ENCODE measurements at regions of chr16 and their contacts with region 1.

Region 1: GRCh38 chr16:85275533-85276249 is 163.4 kb upstream of the CIBAR2 start:
- DNase-seq: peak; percentile 95
- H3K4me3 ChIP-seq: peak overlapping the region in 1 of 2 experiments; percentile 21; a peak in 1 of 4 replicates
- H3K27ac ChIP-seq: peak overlapping the region in 1 of 2 experiments; percentile 31; a peak in 1 of 4 replicates
- H3K4me1 ChIP-seq: peaks cover 0 to 46% of the 10 kb centered on the region in 2 experiments; a peak in 2 of 4 replicates
- H3K27me3 ChIP-seq: no peaks in the 10 kb centered on the region
- CTCF ChIP-seq: peak; percentile 88
- EP300 ChIP-seq: no peak
- RAD21 ChIP-seq: peak; percentile 94

Region 2: DNA sequence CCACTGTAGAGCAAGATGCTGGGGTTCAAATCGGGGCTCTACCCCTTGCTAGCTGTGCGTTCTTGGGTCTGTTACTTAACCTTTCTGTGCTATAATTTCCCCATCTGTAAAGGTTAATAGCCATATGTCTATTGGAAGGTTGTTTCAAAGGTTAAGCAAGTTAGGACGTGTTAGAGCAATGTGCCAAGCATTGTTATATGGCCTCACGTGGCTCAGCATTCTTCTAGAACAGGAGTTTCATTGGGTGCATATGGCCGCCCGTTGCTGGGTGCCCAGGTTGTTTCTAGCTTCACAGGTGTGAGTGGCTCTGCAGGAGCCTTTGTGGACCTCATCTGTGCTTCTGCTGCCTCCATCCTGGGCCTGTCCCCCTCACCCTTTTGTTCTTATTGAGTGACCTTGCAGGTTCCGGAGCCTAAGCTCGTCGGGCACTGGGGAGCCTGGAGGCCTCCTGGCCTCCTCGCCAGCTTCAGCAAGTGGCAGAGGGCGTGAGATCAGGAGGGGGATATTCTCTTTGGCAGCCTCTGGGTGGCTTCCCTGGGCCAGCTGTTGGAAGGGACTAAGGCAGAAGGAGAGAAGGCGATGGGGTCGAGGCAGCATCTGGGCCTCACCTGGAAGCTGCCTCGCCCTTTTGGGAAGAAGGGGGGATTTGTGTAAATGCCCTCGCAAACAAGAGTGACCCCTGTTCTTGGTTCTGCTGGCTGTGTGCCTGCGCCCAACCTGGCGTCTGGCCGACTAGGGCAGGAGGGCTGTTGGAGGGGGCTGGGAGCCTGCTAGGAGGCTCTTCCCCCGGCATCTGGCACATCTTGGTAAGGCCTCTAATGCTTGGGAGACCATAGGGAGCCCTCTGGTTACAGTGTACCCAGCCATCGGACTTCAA is 83.2 kb before region 1 on chr16:
- CTCF ChIA-PET with region 1: no interaction called
- POLR2A ChIA-PET with region 1: no interaction called
- DNase-seq: peak; percentile 60
- H3K4me3 ChIP-seq: no peak overlapping the region
- H3K27ac ChIP-seq: peak overlapping the region in 1 of 2 experiments; percentile 60; a peak in 2 of 4 replicates
- H3K4me1 ChIP-seq: peaks cover 0 to 35% of the 10 kb centered on the region in 2 experiments; a peak in 2 of 4 replicates
- H3K27me3 ChIP-seq: no peaks in the 10 kb centered on the region
- CTCF ChIP-seq: no peak
- EP300 ChIP-seq: no peak
- RAD21 ChIP-seq: peak; percentile 30

Region 3: GRCh38 chr16:85245307-85246172 is 30.2 kb before region 1 on chr16:
- CTCF ChIA-PET with region 1: interaction called, 180 read pairs
- POLR2A ChIA-PET with region 1: no interaction called
- DNase-seq: peak; percentile 82
- H3K4me3 ChIP-seq: no peak overlapping the region; a peak in 1 of 4 replicates
- H3K27ac ChIP-seq: peak overlapping the region in 1 of 2 experiments; percentile 59; a peak in 2 of 4 replicates
- H3K4me1 ChIP-seq: peaks cover 0 to 56% of the 10 kb centered on the region in 2 experiments; a peak in 1 of 4 replicates
- H3K27me3 ChIP-seq: no peaks in the 10 kb centered on the region
- CTCF ChIP-seq: peak; percentile 88
- EP300 ChIP-seq: no peak
- RAD21 ChIP-seq: peak; percentile 89

Region 4: GRCh38 chr16:85286970-85287824 is 11.5 kb after region 1 on chr16:
- CTCF ChIA-PET with region 1: interaction called, 67 read pairs
- POLR2A ChIA-PET with region 1: no interaction called
- DNase-seq: peak; percentile 93
- H3K4me3 ChIP-seq: no peak overlapping the region
- H3K27ac ChIP-seq: peak overlapping the region; percentile 22 to 92; a peak in 3 of 4 replicates
- H3K4me1 ChIP-seq: peaks cover 10 to 71% of the 10 kb centered on the region in 2 experiments; a peak in 3 of 4 replicates
- H3K27me3 ChIP-seq: no peaks in the 10 kb centered on the region
- CTCF ChIP-seq: no peak
- EP300 ChIP-seq: peak in 1 of 2 experiments; percentile 81; a peak in 2 of 4 replicates
- RAD21 ChIP-seq: peak; percentile 36

Region 5: GRCh38 chr16:85330694-85331188 is 55.0 kb after region 1 on chr16:
- CTCF ChIA-PET with region 1: interaction called, 16 read pairs
- POLR2A ChIA-PET with region 1: no interaction called
- DNase-seq: peak; percentile 80
- H3K4me3 ChIP-seq: no peak overlapping the region
- H3K27ac ChIP-seq: peak overlapping the region in 1 of 2 experiments; percentile 85; a peak in 2 of 4 replicates
- H3K4me1 ChIP-seq: peaks cover 12 to 43% of the 10 kb centered on the region in 2 experiments; a peak in 2 of 4 replicates
- H3K27me3 ChIP-seq: no peaks in the 10 kb centered on the region
- CTCF ChIP-seq: peak; percentile 61
- EP300 ChIP-seq: no peak
- RAD21 ChIP-seq: peak; percentile 52

Region 6: DNA sequence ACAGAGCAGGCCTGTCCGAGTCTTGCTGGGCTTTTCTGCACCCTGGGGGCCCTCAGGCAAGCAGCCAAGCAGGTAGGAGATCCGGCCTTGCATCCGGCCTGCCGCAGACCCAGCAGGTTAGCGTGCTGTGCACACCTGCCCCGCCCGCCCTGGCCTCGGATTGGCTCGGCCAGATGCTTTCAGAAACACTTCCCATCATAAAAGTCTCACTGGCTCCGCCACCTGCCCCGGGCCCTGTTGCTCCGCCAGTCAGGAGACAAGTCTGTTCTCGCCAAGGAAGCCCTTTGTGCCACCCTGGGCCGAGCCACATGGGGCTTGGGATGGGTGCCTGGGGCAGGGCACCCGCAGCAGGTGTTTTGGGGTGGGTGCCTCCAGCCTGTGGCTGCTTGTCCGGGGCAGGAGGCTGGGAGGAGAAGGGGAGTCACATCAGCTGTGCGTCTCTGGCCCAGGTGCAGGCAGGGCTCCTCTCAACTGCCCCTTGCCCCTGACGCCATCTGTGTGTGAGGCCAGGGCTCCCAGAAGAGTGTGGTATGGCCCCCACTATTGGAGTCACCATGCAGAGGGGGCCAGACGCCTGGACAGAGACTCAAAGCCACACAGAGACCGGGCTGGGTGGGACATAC is 109.3 kb after region 1 on chr16:
- CTCF ChIA-PET with region 1: interaction called, 11 read pairs
- POLR2A ChIA-PET with region 1: interaction called, 3 read pairs
- DNase-seq: no peak
- H3K4me3 ChIP-seq: no peak overlapping the region
- H3K27ac ChIP-seq: peak overlapping the region in 1 of 2 experiments; percentile 99; a peak in 2 of 4 replicates
- H3K4me1 ChIP-seq: peaks cover 9 to 68% of the 10 kb centered on the region in 2 experiments; a peak in 3 of 4 replicates
- H3K27me3 ChIP-seq: no peaks in the 10 kb centered on the region
- CTCF ChIP-seq: no peak
- EP300 ChIP-seq: no peak
- RAD21 ChIP-seq: no peak

Region 7: DNA sequence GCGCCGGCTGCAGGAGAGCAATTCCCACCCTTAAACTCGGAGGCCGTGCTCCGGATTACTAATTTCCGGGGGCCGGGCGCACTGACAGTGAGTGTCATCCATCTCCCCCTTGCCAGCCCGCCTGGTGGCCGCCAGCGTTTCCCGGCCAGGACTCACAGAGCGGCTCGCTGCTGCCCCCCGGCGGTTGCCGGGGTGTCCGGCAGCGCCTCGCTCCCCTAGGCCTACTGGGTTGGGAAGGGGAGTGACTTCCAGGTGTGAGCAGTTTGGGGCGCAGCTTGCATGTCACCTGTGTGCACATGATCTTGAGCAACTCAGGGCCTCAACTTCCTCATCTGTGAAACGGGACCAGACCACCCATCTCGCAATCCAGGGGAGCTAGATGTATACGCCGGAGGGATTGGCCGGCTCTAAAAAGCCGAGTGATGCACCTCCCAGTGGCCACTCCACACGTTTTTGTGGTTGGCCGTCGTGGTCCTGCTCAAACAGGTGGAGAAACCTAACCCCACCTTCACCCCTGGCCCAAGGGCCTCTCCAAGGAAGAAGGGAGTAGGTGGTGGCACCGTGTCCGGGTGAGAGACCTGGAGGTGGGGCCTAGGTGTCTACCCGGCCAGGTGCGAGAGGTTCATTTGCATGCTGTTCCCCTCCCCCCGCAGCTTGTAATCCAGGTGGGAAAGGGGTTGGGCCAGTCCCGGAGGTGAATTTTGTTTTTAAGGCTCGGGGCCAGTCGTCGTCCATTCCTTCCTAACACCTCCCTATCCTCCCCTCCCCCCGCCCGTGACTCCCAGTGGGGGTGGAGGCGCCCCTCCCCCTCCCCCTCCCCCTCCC is 335.0 kb after region 1 on chr16:
- CTCF ChIA-PET with region 1: interaction called, 15 read pairs
- POLR2A ChIA-PET with region 1: no interaction called
- DNase-seq: peak; percentile 83
- H3K4me3 ChIP-seq: peak overlapping the region; percentile 42 to 86; a peak in 3 of 4 replicates
- H3K27ac ChIP-seq: peak overlapping the region; percentile 74 to 97
- H3K4me1 ChIP-seq: peaks cover 14 to 59% of the 10 kb centered on the region in 2 experiments
- H3K27me3 ChIP-seq: no peaks in the 10 kb centered on the region
- CTCF ChIP-seq: peak; percentile 91
- EP300 ChIP-seq: peak in 1 of 2 experiments; percentile 52; a peak in 2 of 4 replicates
- RAD21 ChIP-seq: peak; percentile 94

Measured in SK-N-SH (cell line).